ENCODE measurements at regions of chr16 and their contacts with region 1.

Region 1: DNA sequence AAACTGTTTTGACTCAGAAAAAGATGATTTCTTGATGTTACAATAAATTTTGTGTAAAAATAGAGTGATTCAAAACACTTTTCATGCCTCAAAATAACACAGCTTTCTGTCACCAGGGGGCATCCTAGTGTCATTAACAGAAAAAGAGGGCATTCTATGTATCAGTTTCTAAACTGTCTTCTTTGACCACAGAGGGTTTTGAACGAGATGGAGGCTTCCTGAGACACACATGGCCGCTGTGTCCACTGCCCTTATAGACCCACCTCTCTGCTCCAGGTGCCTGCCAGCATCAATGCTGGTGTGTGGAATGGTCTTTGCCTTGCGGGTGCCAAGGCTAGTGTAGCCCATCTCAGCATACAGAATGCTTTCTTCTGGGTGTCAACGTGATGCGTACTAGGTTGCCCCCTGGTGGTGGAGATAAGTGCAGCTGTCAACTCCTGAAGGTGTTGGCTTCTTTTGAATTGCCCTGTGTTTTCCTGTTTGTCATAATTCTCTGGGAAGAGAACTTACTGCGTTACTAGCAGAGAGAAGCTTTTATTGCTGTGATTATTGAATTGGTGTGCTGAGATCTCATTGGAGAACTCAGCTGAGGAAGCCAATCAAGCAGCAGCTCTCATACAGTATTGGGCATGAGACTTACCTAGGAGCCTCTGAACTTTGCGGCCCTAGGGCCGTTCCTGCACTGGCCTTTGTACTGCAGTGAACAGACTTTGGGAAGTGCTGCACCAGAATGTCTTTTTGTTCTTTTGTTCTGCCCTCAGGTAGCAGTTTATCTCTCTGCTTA is 38.6 kb downstream of the USP10 start:
- DNase-seq: peak; percentile 44 to 87 (median 78)
- ATAC-seq: peak; percentile 82
- H3K4me3 ChIP-seq: peak overlapping the region in 1 of 2 experiments; percentile 18
- H3K4me3 Mint-ChIP-seq: peak overlapping the region; percentile 53
- H3K27ac ChIP-seq: no peak overlapping the region
- H3K27ac Mint-ChIP-seq: peak overlapping the region; percentile 64
- H3K4me1 ChIP-seq: peaks cover 23% of the 10 kb centered on the region
- H3K4me1 Mint-ChIP-seq: peaks cover 48% of the 10 kb centered on the region
- H3K27me3 ChIP-seq: no peaks in the 10 kb centered on the region
- H3K27me3 Mint-ChIP-seq: no peaks in the 10 kb centered on the region
- CTCF ChIP-seq: peak; percentile 84

Region 2: DNA sequence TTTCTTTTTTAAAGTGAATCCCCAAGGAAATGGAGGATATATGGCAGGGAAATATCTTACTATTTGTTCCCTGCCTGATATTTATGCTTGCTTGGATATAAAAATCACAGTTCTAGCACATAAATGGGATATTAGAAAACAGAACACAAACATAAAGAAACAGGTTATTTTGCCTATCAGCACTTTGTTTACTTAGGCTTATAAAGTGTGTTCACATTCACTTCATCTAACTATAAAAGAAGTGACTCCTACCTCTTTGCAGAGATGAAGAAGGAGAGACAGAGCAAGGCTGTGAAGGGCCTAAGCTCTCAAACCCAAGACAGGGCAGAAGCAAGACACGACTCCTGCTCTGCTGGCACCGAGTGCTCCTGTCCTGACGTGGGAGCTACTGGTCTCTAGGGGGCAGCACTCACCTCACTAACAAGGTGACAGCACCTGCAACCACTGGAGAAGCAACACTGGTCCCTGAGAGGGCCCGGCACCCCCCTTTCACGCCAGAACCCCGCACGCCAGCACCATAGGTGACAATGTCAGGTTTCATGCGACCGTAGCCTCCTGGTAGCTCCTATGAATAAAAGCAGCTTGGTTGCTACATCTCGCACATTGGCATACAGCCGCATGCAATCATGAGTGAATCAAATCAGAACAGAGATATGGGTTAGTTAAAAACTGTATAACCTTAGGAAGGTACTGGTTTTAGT is 653.7 kb before region 1 on chr16:
- CTCF ChIA-PET with region 1: no interaction called
- POLR2A ChIA-PET with region 1: no interaction called
- intact Hi-C with region 1: loop called in 1 of 2 experiments (anchors 10 kb)
- DNase-seq: peak; percentile 44 to 84 (median 71)
- ATAC-seq: peak; percentile 88
- H3K4me3 ChIP-seq: no peak overlapping the region
- H3K4me3 Mint-ChIP-seq: no peak overlapping the region
- H3K27ac ChIP-seq: no peak overlapping the region
- H3K27ac Mint-ChIP-seq: no peak overlapping the region
- H3K4me1 ChIP-seq: peaks cover 20% of the 10 kb centered on the region
- H3K4me1 Mint-ChIP-seq: peaks cover 32% of the 10 kb centered on the region
- H3K27me3 ChIP-seq: no peaks in the 10 kb centered on the region
- H3K27me3 Mint-ChIP-seq: no peaks in the 10 kb centered on the region
- CTCF ChIP-seq: peak; percentile 73

Region 3: DNA sequence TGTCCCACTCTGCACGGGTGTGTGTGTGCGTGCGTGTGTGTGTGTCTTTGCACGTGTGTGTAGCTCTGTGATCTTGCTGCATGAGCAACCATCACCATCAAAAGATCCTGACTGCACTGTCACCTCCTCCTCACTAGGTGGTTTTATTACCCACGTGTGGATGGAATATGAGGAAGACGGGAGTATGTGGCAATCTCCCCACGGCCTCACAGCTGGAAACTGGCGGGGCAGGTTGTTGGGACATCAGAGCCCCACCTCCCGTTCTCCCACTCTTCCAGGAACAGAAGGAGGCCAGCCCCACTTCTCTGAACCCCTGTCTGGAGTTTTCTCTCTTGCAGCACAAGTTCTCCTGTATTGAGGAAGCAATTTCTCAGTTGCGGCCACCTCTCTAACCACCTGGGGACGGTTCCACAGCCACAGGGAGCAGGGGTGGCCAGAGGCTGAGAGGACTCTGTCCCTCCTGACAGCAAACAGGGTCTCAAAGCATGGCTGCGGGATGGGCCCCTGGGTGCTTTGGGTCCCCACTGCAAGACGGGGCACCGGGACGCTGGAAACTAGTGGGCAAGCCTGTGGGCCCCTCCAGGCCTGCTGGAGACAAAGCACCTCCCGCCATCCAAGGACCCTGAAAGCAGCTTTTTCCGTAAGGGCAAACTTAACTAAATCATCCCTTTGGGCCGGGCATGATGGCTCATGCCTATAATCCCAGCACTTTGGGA is 398.0 kb before region 1 on chr16:
- CTCF ChIA-PET with region 1: no interaction called
- POLR2A ChIA-PET with region 1: no interaction called
- intact Hi-C with region 1: no loop called
- DNase-seq: no peak
- ATAC-seq: no peak
- H3K4me3 ChIP-seq: no peak overlapping the region
- H3K4me3 Mint-ChIP-seq: no peak overlapping the region
- H3K27ac ChIP-seq: no peak overlapping the region
- H3K27ac Mint-ChIP-seq: no peak overlapping the region
- H3K4me1 ChIP-seq: no peaks in the 10 kb centered on the region
- H3K4me1 Mint-ChIP-seq: no peaks in the 10 kb centered on the region
- H3K27me3 ChIP-seq: no peaks in the 10 kb centered on the region
- H3K27me3 Mint-ChIP-seq: peaks cover 2% of the 10 kb centered on the region
- CTCF ChIP-seq: no peak

Region 4: GRCh38 chr16:84663433-84664101 is 74.9 kb before region 1 on chr16:
- CTCF ChIA-PET with region 1: interaction called, 13 read pairs
- POLR2A ChIA-PET with region 1: no interaction called
- intact Hi-C with region 1: no loop called
- DNase-seq: no peak
- ATAC-seq: no peak
- H3K4me3 ChIP-seq: no peak overlapping the region
- H3K4me3 Mint-ChIP-seq: no peak overlapping the region
- H3K27ac ChIP-seq: no peak overlapping the region
- H3K27ac Mint-ChIP-seq: no peak overlapping the region
- H3K4me1 ChIP-seq: peaks cover 4% of the 10 kb centered on the region
- H3K4me1 Mint-ChIP-seq: peaks cover 18% of the 10 kb centered on the region
- H3K27me3 ChIP-seq: no peaks in the 10 kb centered on the region
- H3K27me3 Mint-ChIP-seq: no peaks in the 10 kb centered on the region
- CTCF ChIP-seq: no peak

Region 5: DNA sequence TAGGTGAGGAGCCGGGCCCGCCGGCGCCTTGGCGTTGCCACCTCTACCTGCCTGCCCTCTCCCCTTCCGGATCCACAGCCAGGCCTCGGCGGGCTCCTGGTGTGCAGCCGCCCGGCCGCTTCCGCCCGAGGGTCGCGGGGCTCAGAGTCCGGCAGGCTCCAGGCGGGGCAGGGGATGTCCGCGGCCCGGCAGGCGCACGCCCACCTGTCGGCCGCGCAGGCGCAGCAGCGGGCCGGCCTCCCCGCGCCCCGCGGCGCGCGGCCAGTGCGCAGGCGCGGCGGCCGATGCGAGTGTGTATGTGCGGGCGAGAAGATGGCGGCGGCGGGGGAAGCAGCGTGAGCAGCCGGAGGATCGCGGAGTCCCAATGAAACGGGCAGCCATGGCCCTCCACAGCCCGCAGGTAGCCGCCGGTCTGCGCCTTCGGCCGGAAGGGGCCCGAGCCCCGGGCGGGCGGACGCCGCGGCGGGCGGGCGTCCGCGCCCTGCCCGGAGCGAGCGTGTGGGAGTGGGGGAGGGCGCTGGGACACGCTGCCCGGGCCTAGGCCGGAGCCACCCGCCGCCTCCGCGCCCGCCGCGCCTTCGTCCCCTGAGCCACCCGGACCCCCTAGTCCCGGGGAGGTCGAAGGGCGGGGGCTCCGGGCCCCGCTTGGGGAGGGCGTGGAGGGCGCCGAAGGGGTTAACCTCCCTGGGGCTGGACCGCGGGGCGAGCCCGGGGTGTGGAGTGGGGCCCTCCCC is 38.6 kb before region 1 on chr16 and contains the start of gene USP10:
- CTCF ChIA-PET with region 1: interaction called, 8 read pairs
- POLR2A ChIA-PET with region 1: interaction called, 3 read pairs
- intact Hi-C with region 1: loop called in 1 of 2 experiments (anchors 2 kb)
- DNase-seq: peak; percentile 69 to 93 (median 83)
- ATAC-seq: peak; percentile 82
- H3K4me3 ChIP-seq: peak within 1 kb of the TSS; percentile 78 to 86
- H3K4me3 Mint-ChIP-seq: peak within 1 kb of the TSS; percentile 98
- H3K27ac ChIP-seq: peak within 1 kb of the TSS; percentile 67 to 68
- H3K27ac Mint-ChIP-seq: peak within 1 kb of the TSS; percentile 97
- H3K4me1 ChIP-seq: peaks cover 32% of the 10 kb centered on the region
- H3K4me1 Mint-ChIP-seq: peaks cover 43% of the 10 kb centered on the region
- H3K27me3 ChIP-seq: no peaks in the 10 kb centered on the region
- H3K27me3 Mint-ChIP-seq: no peaks in the 10 kb centered on the region
- CTCF ChIP-seq: no peak
- total RNA-seq, gene USP10: 104 to 107 TPM

Region 6: DNA sequence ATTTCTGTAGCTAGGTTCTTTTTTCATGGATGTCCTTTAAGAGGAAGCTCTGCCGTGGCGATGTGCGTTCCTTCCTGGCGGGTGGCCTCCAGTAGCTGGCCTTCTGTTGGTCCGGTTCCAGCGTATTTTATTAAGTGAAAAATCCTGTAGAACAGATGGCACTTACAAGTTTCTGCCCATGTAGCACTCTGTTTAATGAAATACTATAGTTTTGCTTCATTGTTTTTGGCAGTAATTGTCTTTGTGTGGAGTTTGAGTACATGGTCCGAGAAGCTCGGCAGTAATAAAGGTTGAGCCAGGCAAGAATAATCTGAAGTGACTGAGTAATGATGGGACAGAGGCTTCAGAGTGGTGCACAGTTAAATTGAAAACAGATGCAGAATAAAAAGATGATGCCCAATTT is 18.3 kb before region 1 on chr16:
- CTCF ChIA-PET with region 1: interaction called, 135 read pairs
- POLR2A ChIA-PET with region 1: no interaction called
- intact Hi-C with region 1: no loop called
- DNase-seq: no peak
- ATAC-seq: no peak
- H3K4me3 ChIP-seq: no peak overlapping the region
- H3K4me3 Mint-ChIP-seq: no peak overlapping the region
- H3K27ac ChIP-seq: no peak overlapping the region
- H3K27ac Mint-ChIP-seq: no peak overlapping the region
- H3K4me1 ChIP-seq: peaks cover 33% of the 10 kb centered on the region
- H3K4me1 Mint-ChIP-seq: peaks cover 76% of the 10 kb centered on the region
- H3K27me3 ChIP-seq: no peaks in the 10 kb centered on the region
- H3K27me3 Mint-ChIP-seq: no peaks in the 10 kb centered on the region
- CTCF ChIP-seq: no peak

Region 7: GRCh38 chr16:84952335-84953189 is 214.1 kb after region 1 on chr16:
- CTCF ChIA-PET with region 1: interaction called, 11 read pairs
- POLR2A ChIA-PET with region 1: no interaction called
- intact Hi-C with region 1: no loop called
- DNase-seq: peak; percentile 42 to 84 (median 67)
- ATAC-seq: peak; percentile 92
- H3K4me3 ChIP-seq: no peak overlapping the region
- H3K4me3 Mint-ChIP-seq: no peak overlapping the region
- H3K27ac ChIP-seq: no peak overlapping the region
- H3K27ac Mint-ChIP-seq: no peak overlapping the region
- H3K4me1 ChIP-seq: peaks cover 16% of the 10 kb centered on the region
- H3K4me1 Mint-ChIP-seq: peaks cover 9% of the 10 kb centered on the region
- H3K27me3 ChIP-seq: peaks cover 0 to 4% of the 10 kb centered on the region in 2 experiments
- H3K27me3 Mint-ChIP-seq: no peaks in the 10 kb centered on the region
- CTCF ChIP-seq: peak; percentile 93

Measured in CD8-positive, alpha-beta T cell (primary cell).